ENCODE measurements at regions of chr12 and their contacts with region 1.

Region 1: DNA sequence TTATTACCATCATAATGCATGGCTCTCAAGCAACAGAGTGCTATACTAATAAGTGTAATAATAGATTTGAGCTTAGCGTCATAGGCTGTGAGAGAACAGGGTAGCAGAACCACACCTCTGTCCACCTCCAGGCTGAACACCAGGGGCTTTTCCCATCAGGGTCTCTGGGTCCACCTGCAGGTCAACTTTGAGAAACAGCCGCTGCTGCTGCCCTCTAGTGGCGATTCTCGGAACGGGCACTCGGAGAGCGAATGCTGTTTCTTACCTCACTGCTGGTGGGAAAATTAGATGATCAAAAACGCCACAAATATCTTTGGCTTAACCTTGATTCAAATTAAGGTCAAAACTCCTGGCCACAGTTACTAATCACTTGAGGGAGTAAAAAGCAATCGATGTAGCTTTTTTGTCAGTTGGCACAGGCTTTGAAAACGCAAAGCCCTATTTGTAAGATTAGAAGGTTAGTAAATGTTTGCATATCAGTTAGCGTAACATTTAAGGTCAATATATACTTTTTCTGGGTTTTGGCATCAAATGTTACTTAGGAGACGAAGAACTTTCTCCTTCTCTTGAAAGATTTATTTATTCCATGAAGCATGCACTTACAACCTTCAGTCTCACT is 127.9 kb upstream of the TMEM132D start:
- H3K4me3 Mint-ChIP-seq: no peak overlapping the region
- H3K27ac Mint-ChIP-seq: no peak overlapping the region
- H3K4me1 Mint-ChIP-seq: no peaks in the 10 kb centered on the region
- H3K27me3 Mint-ChIP-seq: no peaks in the 10 kb centered on the region

Region 2: DNA sequence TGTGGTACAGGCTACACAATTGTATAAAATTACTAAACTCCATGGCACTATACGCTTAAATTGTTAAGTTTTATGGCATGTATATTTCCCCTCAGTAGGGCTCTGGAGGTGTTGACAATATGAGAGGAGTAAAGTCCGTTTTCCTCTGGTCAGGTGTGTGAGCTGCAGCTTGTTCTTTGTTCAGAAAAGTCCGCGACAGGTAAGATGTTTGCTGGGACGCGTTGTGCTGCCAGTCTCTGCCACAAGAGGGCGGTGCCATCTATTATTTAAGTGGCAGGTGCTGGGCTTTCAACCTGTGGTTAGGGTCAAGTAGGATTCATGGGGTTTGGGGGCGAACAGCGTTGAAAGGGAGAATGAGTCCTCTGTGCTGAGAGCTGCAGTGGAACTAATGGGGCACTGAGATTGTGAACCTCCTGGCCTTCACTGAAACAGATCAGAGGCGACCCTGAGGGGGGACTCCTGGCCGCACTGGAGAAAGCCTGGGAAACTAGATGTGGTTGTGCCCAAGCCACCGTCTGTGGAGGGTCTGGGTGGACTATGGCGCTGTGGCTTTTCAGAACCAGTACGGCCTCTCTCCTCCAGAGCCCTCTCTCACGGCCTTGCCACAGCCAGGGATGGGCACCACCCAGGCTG is 1386.9 kb before region 1 on chr12:
- intact Hi-C with region 1: loop called (anchors 5 kb)
- H3K4me3 Mint-ChIP-seq: no peak overlapping the region
- H3K27ac Mint-ChIP-seq: no peak overlapping the region
- H3K4me1 Mint-ChIP-seq: no peaks in the 10 kb centered on the region
- H3K27me3 Mint-ChIP-seq: no peaks in the 10 kb centered on the region

Region 3: DNA sequence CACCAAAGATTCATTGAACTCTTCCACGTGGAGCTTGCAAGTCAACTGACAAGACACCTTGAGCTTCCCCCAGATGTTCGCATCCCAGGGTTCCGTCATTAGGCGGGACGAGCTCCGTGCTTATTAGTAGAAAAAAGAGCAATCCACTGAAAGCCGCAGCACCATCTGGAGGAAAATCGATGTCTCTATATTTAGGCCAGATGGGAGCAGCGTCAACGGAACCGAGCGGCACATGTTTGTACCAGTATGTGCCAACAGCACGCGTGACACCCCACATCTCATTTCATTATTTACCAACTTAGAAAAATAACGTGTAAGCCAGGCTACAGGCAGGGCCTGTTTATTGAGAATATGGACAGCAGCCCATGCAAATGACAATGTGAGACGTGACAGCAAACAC is 82.0 kb before region 1 on chr12:
- intact Hi-C with region 1: no loop called
- H3K4me3 Mint-ChIP-seq: no peak overlapping the region
- H3K27ac Mint-ChIP-seq: no peak overlapping the region
- H3K4me1 Mint-ChIP-seq: no peaks in the 10 kb centered on the region
- H3K27me3 Mint-ChIP-seq: no peaks in the 10 kb centered on the region

Measured in dendritic cell treated with granulocyte-macrophage colony-stimulating factor and Interleukin-4, amounts not matched to agents 40 ng/mL and 50 ng/mL, for 4 days (primary cell).